H1 (cell line): ENCODE measurements at regions of chr15 and their contacts with region 1.

Region 1: GRCh38 chr15:44219073-44219472 is 24.0 kb upstream of the FRMD5 start:
- DNase-seq: no peak
- H3K4me3 ChIP-seq: no peak overlapping the region
- H3K27ac ChIP-seq: no peak overlapping the region
- H3K4me1 ChIP-seq: peaks cover 0 to 5% (median 2%) of the 10 kb centered on the region in 4 experiments; a peak in 2 of 7 replicates
- H3K27me3 ChIP-seq: no peaks in the 10 kb centered on the region
- CTCF ChIP-seq: no peak
- EP300 ChIP-seq: no peak
- POLR2A ChIP-seq: no peak
- RAD21 ChIP-seq: no peak

Region 2: GRCh38 chr15:44137750-44138149 is 81.3 kb before region 1 on chr15:
- CTCF ChIA-PET with region 1: no interaction called
- POLR2A ChIA-PET with region 1: no interaction called
- DNase-seq: no peak
- H3K4me3 ChIP-seq: no peak overlapping the region
- H3K27ac ChIP-seq: no peak overlapping the region
- H3K4me1 ChIP-seq: no peaks in the 10 kb centered on the region
- H3K27me3 ChIP-seq: no peaks in the 10 kb centered on the region
- CTCF ChIP-seq: no peak
- EP300 ChIP-seq: no peak
- POLR2A ChIP-seq: no peak
- RAD21 ChIP-seq: no peak

Region 3: DNA sequence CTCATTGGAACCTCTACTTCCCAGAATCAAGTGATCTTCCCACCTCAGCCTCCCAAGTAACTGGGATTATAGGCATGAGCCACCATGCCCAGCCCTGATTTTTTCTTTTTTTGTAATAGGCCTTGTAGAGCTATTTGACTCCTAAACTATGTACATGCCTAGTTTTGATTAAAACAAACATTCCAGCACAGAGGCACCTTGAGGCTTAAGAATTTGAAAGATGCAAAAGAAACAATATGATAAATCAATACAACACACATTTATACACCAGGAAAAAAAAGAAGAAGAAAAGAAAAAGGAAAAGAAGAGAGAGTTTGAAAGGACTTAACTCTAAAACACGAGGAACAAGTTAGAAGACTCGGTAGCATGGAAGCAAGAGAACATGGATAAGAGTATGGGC is 10.1 kb before region 1 on chr15:
- CTCF ChIA-PET with region 1: interaction called, 22 read pairs
- POLR2A ChIA-PET with region 1: no interaction called
- DNase-seq: no peak
- H3K4me3 ChIP-seq: no peak overlapping the region
- H3K27ac ChIP-seq: no peak overlapping the region
- H3K4me1 ChIP-seq: no peaks in the 10 kb centered on the region; a peak in 1 of 7 replicates
- H3K27me3 ChIP-seq: no peaks in the 10 kb centered on the region
- CTCF ChIP-seq: no peak
- EP300 ChIP-seq: no peak
- POLR2A ChIP-seq: no peak
- RAD21 ChIP-seq: no peak

Region 4: GRCh38 chr15:44250566-44251205 is 31.6 kb after region 1 on chr15:
- CTCF ChIA-PET with region 1: no interaction called
- POLR2A ChIA-PET with region 1: no interaction called
- DNase-seq: no peak
- H3K4me3 ChIP-seq: no peak overlapping the region
- H3K27ac ChIP-seq: no peak overlapping the region
- H3K4me1 ChIP-seq: no peaks in the 10 kb centered on the region
- H3K27me3 ChIP-seq: no peaks in the 10 kb centered on the region
- CTCF ChIP-seq: no peak
- EP300 ChIP-seq: no peak
- POLR2A ChIP-seq: no peak
- RAD21 ChIP-seq: no peak

Region 5: DNA sequence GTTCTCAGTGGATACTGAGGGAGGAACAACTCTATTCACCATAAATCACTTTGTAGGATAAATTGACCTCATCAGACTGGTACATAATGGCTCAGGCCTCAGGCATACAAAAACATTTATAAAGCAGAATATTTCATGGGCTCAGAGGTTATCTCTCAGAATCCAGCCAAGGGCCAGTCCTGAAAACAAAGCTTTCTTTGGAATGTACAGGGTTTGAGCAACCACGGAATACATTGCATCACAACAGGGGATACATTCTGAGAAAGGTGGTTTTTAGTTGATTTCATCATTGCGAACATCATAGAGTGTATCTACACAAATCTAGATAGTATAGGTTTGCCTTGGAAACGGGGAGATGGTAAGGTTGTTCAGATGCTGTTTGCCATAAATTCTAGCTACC is 175.0 kb after region 1 on chr15:
- CTCF ChIA-PET with region 1: no interaction called
- POLR2A ChIA-PET with region 1: no interaction called
- DNase-seq: no peak
- H3K4me3 ChIP-seq: no peak overlapping the region
- H3K27ac ChIP-seq: no peak overlapping the region
- H3K4me1 ChIP-seq: no peaks in the 10 kb centered on the region
- H3K27me3 ChIP-seq: no peaks in the 10 kb centered on the region
- CTCF ChIP-seq: no peak
- EP300 ChIP-seq: no peak
- POLR2A ChIP-seq: no peak
- RAD21 ChIP-seq: no peak